Posterior vena cava (tissue), 2 donors: ENCODE measurements at regions of chr20 and their contacts with region 1.

Region 1: GRCh38 chr20:39892983-39893685 is 795.9 kb downstream of the MAFB start:
- DNase-seq: no peak

Region 2: GRCh38 chr20:39800548-39800947 is 92.6 kb before region 1 on chr20:
- intact Hi-C with region 1: no loop called
- DNase-seq: peak; percentile 87

Region 3: DNA sequence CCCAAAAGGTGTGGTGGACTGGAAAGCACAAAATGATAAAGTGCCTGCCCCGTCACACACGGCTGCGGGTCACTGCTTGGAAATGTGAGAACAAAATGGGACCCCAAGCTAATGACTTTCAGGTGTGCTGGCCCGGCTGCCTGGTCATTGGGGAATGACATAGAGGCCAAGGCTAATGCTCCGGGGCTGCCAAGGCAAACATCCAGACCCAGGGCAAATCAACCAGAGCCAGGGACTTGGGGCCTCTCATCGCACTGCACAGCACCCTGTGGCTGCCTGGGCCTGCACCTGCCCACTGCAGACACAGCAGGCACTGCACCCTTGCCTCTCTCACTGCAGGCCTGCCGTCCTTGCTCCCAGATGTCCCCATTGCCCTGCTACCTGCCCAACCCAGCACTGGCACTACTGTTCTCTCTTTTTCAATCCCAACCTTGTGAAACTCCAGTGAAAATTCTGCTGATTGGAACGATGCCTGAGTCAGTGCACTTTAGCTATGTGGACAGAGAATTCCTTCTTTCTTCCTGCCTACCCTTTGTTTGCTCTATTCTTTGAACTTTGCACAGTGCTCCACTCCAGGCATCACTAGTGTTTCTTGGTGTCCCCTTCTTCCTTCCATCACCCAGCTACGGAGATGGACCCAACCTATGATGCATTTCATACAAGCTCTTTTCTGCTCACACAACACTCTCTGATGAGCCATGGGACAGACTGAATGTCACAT is 53.6 kb before region 1 on chr20:
- intact Hi-C with region 1: loop called in 1 of 2 experiments (anchors 2 kb)
- DNase-seq: no peak

Region 4: GRCh38 chr20:40956542-40957264 is 1063.6 kb after region 1 on chr20:
- intact Hi-C with region 1: loop called (anchors 5 to 10 kb)
- DNase-seq: no peak